ENCODE measurements at regions of chr4 and their contacts with region 1.

Region 1: GRCh38 chr4:75673027-75673958 is at the start of gene G3BP2:
- DNase-seq: peak; percentile 98 to 99 (median 99)
- H3K4me3 ChIP-seq: peak within 1 kb of the TSS; percentile 76 to 99 (median 83)
- H3K27ac ChIP-seq: peak within 1 kb of the TSS; percentile 89 to 98 (median 96)
- H3K4me1 ChIP-seq: peaks cover 13 to 36% of the 10 kb centered on the region in 2 donors
- H3K27me3 ChIP-seq: no peaks in the 10 kb centered on the region
- CTCF ChIP-seq: no peak
- POLR2A ChIP-seq: peak; percentile 95 to 97
- total RNA-seq, gene G3BP2: 80.4 to 215 (median 116) TPM

Region 2: GRCh38 chr4:75385106-75385505 is 288.2 kb before region 1 on chr4:
- intact Hi-C with region 1: no loop called
- DNase-seq: no peak
- H3K4me3 ChIP-seq: no peak overlapping the region
- H3K27ac ChIP-seq: no peak overlapping the region
- H3K4me1 ChIP-seq: no peaks in the 10 kb centered on the region
- H3K27me3 ChIP-seq: no peaks in the 10 kb centered on the region
- CTCF ChIP-seq: no peak
- POLR2A ChIP-seq: no peak

Region 3: GRCh38 chr4:75623026-75623425 is 50.3 kb before region 1 on chr4:
- intact Hi-C with region 1: no loop called
- DNase-seq: no peak
- H3K4me3 ChIP-seq: no peak overlapping the region
- H3K27ac ChIP-seq: no peak overlapping the region
- H3K4me1 ChIP-seq: no peaks in the 10 kb centered on the region
- H3K27me3 ChIP-seq: no peaks in the 10 kb centered on the region
- CTCF ChIP-seq: no peak
- POLR2A ChIP-seq: no peak

Region 4: DNA sequence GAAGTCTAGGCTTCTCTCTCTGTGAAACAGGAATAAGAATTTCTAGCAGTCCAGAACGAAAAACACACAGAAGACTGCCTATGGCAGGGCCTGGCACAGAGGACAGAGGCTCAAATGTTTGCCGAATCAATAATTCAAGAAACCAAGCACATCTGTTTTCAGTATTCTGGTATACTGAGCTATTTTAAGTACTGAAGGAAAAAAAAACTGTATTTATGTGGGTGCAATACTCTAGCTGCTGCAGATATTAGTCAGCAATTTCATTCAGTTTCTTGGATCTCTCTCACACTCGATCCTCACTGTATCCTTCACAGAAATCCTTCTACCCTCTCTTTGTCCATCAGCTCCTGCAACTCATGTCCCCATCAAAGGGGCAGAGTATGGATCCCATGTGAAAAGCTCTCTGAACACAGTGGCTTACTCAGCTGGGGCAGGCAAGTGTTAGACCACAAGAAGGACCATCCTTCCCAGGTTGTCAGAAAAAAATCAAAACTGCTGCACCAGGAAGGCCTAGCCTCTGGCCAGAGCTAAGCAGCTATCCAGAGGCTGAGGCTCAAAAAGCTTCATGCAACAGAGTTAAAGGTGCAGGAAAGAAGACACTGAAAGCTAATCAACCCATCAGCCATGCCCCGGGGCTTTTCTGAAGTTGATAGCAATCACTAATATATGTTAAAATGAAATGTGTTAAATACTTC is 42.0 kb after region 1 on chr4:
- intact Hi-C with region 1: loop called (anchors 5 to 10 kb)
- DNase-seq: no peak
- H3K4me3 ChIP-seq: no peak overlapping the region
- H3K27ac ChIP-seq: peak overlapping the region in 1 of 5 donors; percentile 41
- H3K4me1 ChIP-seq: peaks cover 0 to 18% of the 10 kb centered on the region in 2 donors
- H3K27me3 ChIP-seq: no peaks in the 10 kb centered on the region
- CTCF ChIP-seq: no peak
- POLR2A ChIP-seq: no peak

Region 5: GRCh38 chr4:75724066-75724866 is 51.0 kb after region 1 on chr4 and contains the start of gene USO1:
- intact Hi-C with region 1: loop called (anchors 5 to 10 kb)
- DNase-seq: peak; percentile 99 to 100 (median 99)
- H3K4me3 ChIP-seq: peak within 1 kb of the TSS; percentile 53 to 86 (median 62)
- H3K27ac ChIP-seq: peak within 1 kb of the TSS; percentile 83 to 99 (median 99)
- H3K4me1 ChIP-seq: peaks cover 29 to 49% of the 10 kb centered on the region in 2 donors
- H3K27me3 ChIP-seq: no peaks in the 10 kb centered on the region
- CTCF ChIP-seq: peak; percentile 69 to 89 (median 80)
- POLR2A ChIP-seq: peak; percentile 92 to 99
- total RNA-seq, gene USO1: 55.3 to 109 (median 71.4) TPM

Region 6: DNA sequence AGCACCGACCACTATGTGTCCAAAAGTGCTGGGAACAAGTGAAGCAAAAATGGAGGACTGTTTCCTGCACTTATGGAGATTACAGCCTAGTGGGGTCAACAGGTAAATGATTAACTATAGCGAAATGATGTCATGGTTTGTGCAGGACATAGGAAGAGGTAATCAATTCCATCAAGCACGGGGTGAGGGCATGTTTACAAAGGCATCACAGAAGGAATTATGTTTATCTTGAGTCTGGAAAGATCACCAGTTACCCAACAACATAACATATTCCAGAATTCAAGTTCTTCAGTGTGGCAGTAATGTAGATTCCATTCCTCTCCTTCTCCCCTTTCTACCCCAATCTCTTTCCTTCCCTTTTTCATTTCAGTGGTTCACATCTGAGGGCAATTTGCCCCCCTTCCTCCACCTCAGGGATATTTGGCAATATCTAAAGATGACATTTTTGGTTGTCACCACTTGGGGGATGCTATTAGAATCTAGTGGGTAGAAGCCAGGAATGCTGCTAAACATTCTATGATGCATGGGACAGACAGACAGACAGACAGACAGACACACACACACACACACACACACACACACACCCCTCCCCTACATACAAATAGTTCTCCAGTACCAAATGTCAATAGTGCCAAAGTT is 602.3 kb after region 1 on chr4:
- intact Hi-C with region 1: no loop called
- DNase-seq: no peak
- H3K4me3 ChIP-seq: no peak overlapping the region
- H3K27ac ChIP-seq: no peak overlapping the region
- H3K4me1 ChIP-seq: no peaks in the 10 kb centered on the region
- H3K27me3 ChIP-seq: no peaks in the 10 kb centered on the region
- CTCF ChIP-seq: no peak
- POLR2A ChIP-seq: no peak